ENCODE measurements at regions of chr7 and their contacts with region 1.

Region 1: GRCh38 chr7:45863715-45864114 is 9.2 kb downstream of the CCDC201 start:
- DNase-seq: no peak
- H3K4me3 ChIP-seq: no peak overlapping the region
- H3K27ac ChIP-seq: no peak overlapping the region
- H3K4me1 ChIP-seq: no peaks in the 10 kb centered on the region
- H3K27me3 ChIP-seq: no peaks in the 10 kb centered on the region
- CTCF ChIP-seq: no peak

Region 2: GRCh38 chr7:45157653-45158401 is 705.9 kb before region 1 on chr7 and contains the start of gene RAMP3:
- intact Hi-C with region 1: loop called (anchors 10 kb)
- DNase-seq: no peak
- H3K4me3 ChIP-seq: no peak within 1 kb of the TSS
- H3K27ac ChIP-seq: no peak within 1 kb of the TSS
- H3K4me1 ChIP-seq: no peaks in the 10 kb centered on the region
- H3K27me3 ChIP-seq: peaks cover 8% of the 10 kb centered on the region
- CTCF ChIP-seq: no peak
- total RNA-seq, gene RAMP3: 7.2 to 8.5 TPM

Region 3: GRCh38 chr7:45663167-45663921 is 200.4 kb before region 1 on chr7:
- intact Hi-C with region 1: loop called (anchors 5 kb)
- DNase-seq: peak; percentile 32
- H3K4me3 ChIP-seq: no peak overlapping the region
- H3K27ac ChIP-seq: no peak overlapping the region
- H3K4me1 ChIP-seq: no peaks in the 10 kb centered on the region
- H3K27me3 ChIP-seq: no peaks in the 10 kb centered on the region
- CTCF ChIP-seq: peak; percentile 74

Measured in colonic mucosa (tissue), 4 donors.